A549 (cell line): ENCODE measurements at regions of chr12 and their contacts with region 1.

Region 1: DNA sequence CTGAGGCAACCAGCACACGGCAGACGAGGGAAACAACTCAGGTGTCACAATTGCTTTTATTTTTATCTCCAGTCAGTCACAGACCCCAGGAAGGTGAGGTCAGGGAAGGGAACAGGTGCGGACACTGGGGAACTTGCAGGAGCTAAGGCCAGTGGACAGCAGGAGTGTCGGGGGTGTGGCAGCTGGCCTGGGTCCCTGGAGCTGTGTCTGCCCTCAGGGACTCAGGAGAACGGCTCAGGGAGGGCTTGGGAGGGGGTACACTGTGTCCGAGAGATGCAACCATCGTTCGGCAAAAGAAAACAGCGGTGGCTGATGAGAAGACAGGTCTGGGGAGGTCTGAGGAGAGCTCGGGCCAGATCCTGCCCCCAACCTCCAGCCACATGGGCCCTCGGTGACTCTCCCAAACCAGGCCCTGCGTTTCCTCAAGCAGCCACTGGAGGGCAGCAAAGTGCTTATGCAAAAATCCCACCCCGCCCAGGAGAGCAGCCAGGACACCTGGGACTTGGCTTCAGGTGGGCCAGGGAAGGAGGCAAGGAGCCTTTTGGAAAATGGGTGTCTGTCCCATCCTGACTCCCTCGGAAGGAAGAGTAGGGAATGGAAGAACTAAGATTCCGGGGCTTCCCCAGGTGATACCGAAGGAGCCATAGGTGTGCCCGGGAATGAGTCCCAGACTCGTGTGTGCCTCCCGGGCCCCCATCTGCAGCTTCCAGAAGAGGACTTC is 24.1 kb upstream of the BCDIN3D start:
- DNase-seq: peak; percentile 66 to 95
- ATAC-seq: peak; percentile 55 to 92
- H3K4me3 ChIP-seq: no peak overlapping the region
- H3K27ac ChIP-seq: peak overlapping the region in 1 of 2 experiments; percentile 22; a peak in 1 of 6 replicates
- H3K4me1 ChIP-seq: no peaks in the 10 kb centered on the region; the same call in 2 of the 3 replicates
- CTCF ChIP-seq: peak; percentile 88
- EP300 ChIP-seq: no peak
- POLR2A ChIP-seq: no peak
- RAD21 ChIP-seq: peak; percentile 84 to 91

Region 2: DNA sequence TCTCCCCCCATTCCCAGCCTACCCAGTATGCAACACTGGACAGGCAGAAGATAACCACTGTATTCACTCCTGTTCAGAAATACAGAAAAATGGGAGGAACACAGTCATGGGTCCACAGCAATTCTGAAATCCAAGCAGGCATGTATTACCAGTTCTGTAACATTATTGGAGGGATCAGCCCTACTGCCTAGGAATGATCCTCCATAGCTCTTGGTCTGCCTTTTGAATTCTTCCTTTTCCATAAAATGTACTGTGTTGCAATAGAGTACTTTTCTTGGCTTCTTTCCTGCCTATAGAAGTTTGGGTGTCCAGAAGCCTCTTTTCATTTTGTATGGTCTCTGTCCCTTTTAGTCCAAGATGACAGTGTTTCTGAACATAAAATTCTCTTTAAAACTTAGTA is 453.2 kb before region 1 on chr12:
- CTCF ChIA-PET with region 1: no interaction called
- POLR2A ChIA-PET with region 1: no interaction called
- DNase-seq: no peak
- ATAC-seq: 0 out of 6 replicates have a peak, but pooled peaks of 1 of the 2 experiments have one; percentile 23
- H3K4me3 ChIP-seq: no peak overlapping the region
- H3K27ac ChIP-seq: no peak overlapping the region
- H3K4me1 ChIP-seq: peaks cover 48% of the 10 kb centered on the region
- CTCF ChIP-seq: no peak
- EP300 ChIP-seq: no peak
- POLR2A ChIP-seq: no peak
- RAD21 ChIP-seq: no peak

Region 3: GRCh38 chr12:49855005-49855404 is 12.0 kb before region 1 on chr12:
- CTCF ChIA-PET with region 1: interaction called, 25 read pairs
- POLR2A ChIA-PET with region 1: no interaction called
- DNase-seq: no peak
- ATAC-seq: peak in 1 of 2 experiments; percentile 47; a peak in 2 of 6 replicates
- H3K4me3 ChIP-seq: no peak overlapping the region
- H3K27ac ChIP-seq: no peak overlapping the region
- H3K4me1 ChIP-seq: no peaks in the 10 kb centered on the region
- CTCF ChIP-seq: no peak
- EP300 ChIP-seq: no peak
- POLR2A ChIP-seq: no peak
- RAD21 ChIP-seq: no peak

Region 4: GRCh38 chr12:49888461-49889151 is 21.6 kb after region 1 on chr12:
- CTCF ChIA-PET with region 1: interaction called, 42 read pairs
- POLR2A ChIA-PET with region 1: no interaction called
- DNase-seq: no peak
- ATAC-seq: no peak
- H3K4me3 ChIP-seq: no peak overlapping the region
- H3K27ac ChIP-seq: peak overlapping the region; percentile 8 to 24; a peak in 3 of 6 replicates
- H3K4me1 ChIP-seq: peaks cover 13% of the 10 kb centered on the region
- CTCF ChIP-seq: no peak
- EP300 ChIP-seq: no peak
- POLR2A ChIP-seq: no peak
- RAD21 ChIP-seq: no peak

Region 5: GRCh38 chr12:49945394-49946080 is 78.5 kb after region 1 on chr12:
- CTCF ChIA-PET with region 1: interaction called, 29 read pairs
- POLR2A ChIA-PET with region 1: no interaction called
- DNase-seq: peak; percentile 82 to 93
- ATAC-seq: peak; percentile 97 to 99
- H3K4me3 ChIP-seq: no peak overlapping the region
- H3K27ac ChIP-seq: peak overlapping the region; percentile 6 to 59; a peak in 3 of 6 replicates
- H3K4me1 ChIP-seq: 0 out of 3 replicates have a peak, but pooled peaks cover 7% of the 10 kb centered on the region
- CTCF ChIP-seq: peak; percentile 91
- EP300 ChIP-seq: no peak
- POLR2A ChIP-seq: no peak
- RAD21 ChIP-seq: peak; percentile 54 to 55; a peak in 4 of 5 replicates

Region 6: DNA sequence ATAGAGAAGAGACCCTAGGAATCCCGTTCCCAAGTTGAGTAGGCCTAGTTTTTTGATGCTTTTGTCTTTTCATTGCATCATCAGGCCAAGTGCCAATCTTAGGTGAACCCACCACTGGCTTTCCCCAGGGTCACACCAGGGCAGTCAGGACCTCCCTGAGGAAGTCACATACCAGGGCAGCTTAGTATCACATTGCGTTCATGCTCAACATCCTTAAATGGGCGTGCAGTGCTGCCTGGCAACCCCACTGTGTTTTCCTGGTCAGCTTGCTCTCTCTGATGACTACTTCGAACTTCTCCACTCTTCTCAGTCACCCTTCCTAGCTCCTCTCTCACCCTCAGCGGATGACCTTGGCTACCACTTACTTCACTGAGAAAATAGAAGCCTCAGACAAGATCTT is 199.4 kb after region 1 on chr12:
- CTCF ChIA-PET with region 1: interaction called, 43 read pairs
- POLR2A ChIA-PET with region 1: no interaction called
- DNase-seq: peak in 1 of 2 experiments; percentile 72
- ATAC-seq: peak in 1 of 2 experiments; percentile 57; a peak in 3 of 6 replicates
- H3K4me3 ChIP-seq: no peak overlapping the region
- H3K27ac ChIP-seq: no peak overlapping the region
- H3K4me1 ChIP-seq: peaks cover 12% of the 10 kb centered on the region; the same call in 2 of the 3 replicates
- CTCF ChIP-seq: no peak
- EP300 ChIP-seq: no peak
- POLR2A ChIP-seq: no peak
- RAD21 ChIP-seq: no peak

Region 7: DNA sequence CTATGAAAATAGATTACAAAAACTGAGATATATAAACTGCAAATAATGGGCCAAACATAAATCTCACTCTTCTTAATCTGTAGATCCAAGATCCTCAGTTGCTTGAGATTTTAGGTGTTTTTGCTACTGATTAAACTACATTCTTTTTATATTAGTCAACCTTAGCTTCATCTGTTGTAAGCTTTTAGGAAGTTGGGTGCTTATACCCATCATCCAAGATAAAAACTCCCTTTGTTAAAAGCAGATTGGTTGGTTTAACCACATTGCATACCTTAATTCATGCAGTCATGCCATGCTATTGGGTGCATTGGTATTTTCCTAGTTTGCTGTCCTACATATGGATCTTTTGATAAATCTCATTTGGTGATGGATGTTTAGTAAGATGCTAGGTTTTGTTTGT is 591.6 kb after region 1 on chr12:
- CTCF ChIA-PET with region 1: no interaction called
- POLR2A ChIA-PET with region 1: no interaction called
- DNase-seq: no peak
- ATAC-seq: no peak
- H3K4me3 ChIP-seq: no peak overlapping the region
- H3K27ac ChIP-seq: no peak overlapping the region
- H3K4me1 ChIP-seq: 0 out of 3 replicates have a peak, but pooled peaks cover 3% of the 10 kb centered on the region
- CTCF ChIP-seq: no peak
- EP300 ChIP-seq: no peak
- POLR2A ChIP-seq: no peak
- RAD21 ChIP-seq: no peak